Heart left ventricle (tissue), 16 donors: ENCODE measurements at regions of chr4 and their contacts with region 1.

Region 1: DNA sequence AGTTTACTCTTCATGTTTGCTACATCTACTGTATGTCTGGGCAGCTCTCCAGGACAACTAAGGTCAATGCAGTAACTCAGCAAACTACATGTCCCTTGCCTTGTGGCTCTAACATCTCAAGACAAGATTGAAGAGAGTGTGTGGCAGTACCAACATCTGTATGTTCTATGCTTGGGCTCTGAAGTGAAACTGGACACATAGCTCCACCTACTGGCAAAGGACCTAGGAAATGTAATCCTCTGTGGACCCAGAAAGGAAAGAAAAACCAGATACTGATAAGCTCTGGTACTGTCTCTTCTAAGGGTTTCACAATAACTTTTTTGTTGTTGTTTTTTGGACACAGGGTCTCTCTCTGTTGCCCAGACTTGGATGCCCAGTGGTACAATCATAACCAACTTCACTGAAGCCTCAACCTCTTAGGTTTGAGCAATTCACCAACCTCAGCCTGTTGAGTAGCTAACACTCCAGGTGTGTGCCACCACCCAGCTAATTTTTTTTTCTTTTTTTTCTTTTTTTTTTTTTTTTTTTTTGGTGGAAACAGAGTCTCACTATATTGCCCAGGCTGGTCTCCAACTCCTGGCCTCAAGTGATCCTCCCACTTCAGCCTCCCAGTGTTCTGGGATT is 64.1 kb downstream of the QDPR start:
- DNase-seq: peak in 2 of 5 donors; percentile 42 to 51
- ATAC-seq: peak; percentile 58 to 91 (median 87)
- H3K4me3 ChIP-seq: no peak overlapping the region
- H3K27ac ChIP-seq: no peak overlapping the region
- H3K4me1 ChIP-seq: peaks cover 0 to 2% (median 0%) of the 10 kb centered on the region in 12 donors
- H3K27me3 ChIP-seq: no peaks in the 10 kb centered on the region
- CTCF ChIP-seq: peak; percentile 48 to 80 (median 64)
- POLR2A ChIP-seq: no peak

Region 2: DNA sequence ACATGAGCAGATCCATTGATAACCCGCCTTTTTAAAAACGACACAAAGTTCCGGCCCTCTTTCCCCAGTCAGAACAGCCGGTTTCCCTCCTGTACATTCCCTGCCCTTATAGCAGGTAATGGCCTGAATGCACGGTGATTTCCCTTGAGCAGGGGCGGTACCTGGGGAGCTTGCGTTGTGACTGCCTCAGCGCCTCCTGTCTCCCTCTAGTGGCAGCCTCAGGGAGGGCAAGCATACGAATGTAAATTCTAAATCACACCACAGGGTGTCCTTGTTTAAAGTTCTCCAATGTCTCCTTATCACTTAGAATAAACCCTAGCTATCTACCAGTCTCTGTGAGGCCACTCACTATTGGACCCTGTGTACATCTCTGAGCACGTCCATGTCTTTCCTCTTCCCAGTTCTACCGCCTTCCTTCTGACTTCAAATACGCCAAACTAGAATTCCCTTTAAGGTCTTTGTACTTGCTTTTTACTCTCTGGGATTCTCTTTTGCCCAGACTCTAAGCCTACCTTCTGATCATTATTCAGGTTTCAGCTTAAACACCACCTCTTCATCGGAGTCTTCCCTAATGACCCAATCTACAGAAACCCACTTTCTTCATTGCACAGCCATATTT is 531.0 kb before region 1 on chr4:
- intact Hi-C with region 1: loop called in 1 of 10 experiments (anchors 5 kb)
- DNase-seq: peak in 4 of 5 donors; percentile 27 to 68 (median 48)
- ATAC-seq: peak in 3 of 4 donors; percentile 22 to 69 (median 45)
- H3K4me3 ChIP-seq: no peak overlapping the region
- H3K27ac ChIP-seq: no peak overlapping the region
- H3K4me1 ChIP-seq: no peaks in the 10 kb centered on the region
- H3K27me3 ChIP-seq: no peaks in the 10 kb centered on the region
- CTCF ChIP-seq: peak; percentile 58 to 86 (median 71)
- POLR2A ChIP-seq: no peak

Region 3: DNA sequence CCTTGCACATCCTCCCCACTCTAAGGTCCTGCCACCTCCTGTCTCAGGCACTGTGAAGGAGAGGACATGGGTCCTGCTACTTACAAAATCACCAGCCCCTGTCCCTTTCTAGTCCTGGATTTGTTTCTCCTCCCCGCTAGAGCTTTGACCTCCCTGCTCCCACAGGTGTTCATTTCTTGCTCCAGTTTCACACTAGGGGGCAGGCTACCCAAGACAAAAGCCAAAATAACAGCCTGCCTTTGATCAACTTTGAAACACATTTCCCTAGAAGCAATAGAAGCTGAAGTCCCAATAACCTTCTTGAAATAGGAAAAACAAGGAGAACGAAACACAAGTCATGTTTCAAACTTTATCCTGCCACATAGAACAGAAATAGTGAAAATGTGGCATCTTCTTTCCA is 100.3 kb before region 1 on chr4:
- intact Hi-C with region 1: loop called in 8 of 10 experiments (anchors 5 to 10 kb)
- DNase-seq: no peak
- ATAC-seq: peak in 2 of 4 donors; percentile 18 to 41
- H3K4me3 ChIP-seq: no peak overlapping the region
- H3K27ac ChIP-seq: no peak overlapping the region
- H3K4me1 ChIP-seq: no peaks in the 10 kb centered on the region
- H3K27me3 ChIP-seq: no peaks in the 10 kb centered on the region
- CTCF ChIP-seq: peak; percentile 17 to 64 (median 42)
- POLR2A ChIP-seq: no peak

Region 4: GRCh38 chr4:17356926-17357325 is 90.9 kb before region 1 on chr4:
- intact Hi-C with region 1: loop called in 2 of 10 experiments (anchors 5 to 10 kb)
- DNase-seq: no peak
- ATAC-seq: no peak
- H3K4me3 ChIP-seq: no peak overlapping the region
- H3K27ac ChIP-seq: no peak overlapping the region
- H3K4me1 ChIP-seq: no peaks in the 10 kb centered on the region
- H3K27me3 ChIP-seq: peaks cover 0 to 7% (median 0%) of the 10 kb centered on the region in 9 donors
- CTCF ChIP-seq: no peak
- POLR2A ChIP-seq: no peak